ENCODE measurements at regions of chr13 and their contacts with region 1.

Region 1: DNA sequence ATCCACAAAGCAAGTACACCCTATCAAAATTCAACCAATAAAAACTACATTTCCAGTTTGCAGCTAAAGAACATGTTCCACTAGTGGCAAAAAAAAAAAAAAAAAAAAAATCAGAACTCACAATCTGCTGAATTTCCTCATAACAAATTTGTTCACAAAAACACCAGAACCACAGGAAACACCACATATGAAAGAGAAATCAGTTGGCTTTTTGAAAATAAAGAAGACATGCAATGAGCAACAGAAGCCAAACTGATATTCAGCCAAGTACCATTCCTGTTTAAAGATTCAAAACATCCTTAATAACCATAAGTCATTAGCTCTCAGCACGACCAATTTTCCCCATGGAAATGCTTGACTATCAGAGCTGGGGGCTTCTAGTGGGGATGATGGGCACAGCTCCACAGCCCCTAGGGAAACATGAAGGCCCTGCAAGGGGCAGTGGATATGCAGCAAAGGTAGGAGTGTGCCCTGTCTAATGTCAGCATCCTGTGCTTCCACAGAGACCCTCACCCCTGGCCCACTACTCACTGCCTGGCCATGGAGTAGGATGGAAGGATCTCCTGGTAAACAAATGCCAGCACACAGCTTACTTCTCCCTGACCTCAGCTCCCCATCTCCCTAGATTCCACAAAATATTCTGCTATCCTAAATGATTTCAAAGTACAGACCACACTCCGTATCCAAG is 74.0 kb upstream of the DOCK9 start:
- DNase-seq: peak in 4 of 5 donors; percentile 55 to 66 (median 62)
- H3K4me3 ChIP-seq: peak overlapping the region; percentile 36 to 57
- H3K4me3 Mint-ChIP-seq: peak overlapping the region; percentile 70 to 89 (median 85)
- H3K27ac ChIP-seq: peak overlapping the region; percentile 38
- H3K27ac Mint-ChIP-seq: peak overlapping the region; percentile 86 to 97 (median 94)
- H3K4me1 ChIP-seq: peaks cover 97% of the 10 kb centered on the region
- H3K4me1 Mint-ChIP-seq: peaks cover 70 to 97% (median 85%) of the 10 kb centered on the region in 4 donors
- H3K27me3 ChIP-seq: no peaks in the 10 kb centered on the region
- H3K27me3 Mint-ChIP-seq: no peaks in the 10 kb centered on the region

Region 2: DNA sequence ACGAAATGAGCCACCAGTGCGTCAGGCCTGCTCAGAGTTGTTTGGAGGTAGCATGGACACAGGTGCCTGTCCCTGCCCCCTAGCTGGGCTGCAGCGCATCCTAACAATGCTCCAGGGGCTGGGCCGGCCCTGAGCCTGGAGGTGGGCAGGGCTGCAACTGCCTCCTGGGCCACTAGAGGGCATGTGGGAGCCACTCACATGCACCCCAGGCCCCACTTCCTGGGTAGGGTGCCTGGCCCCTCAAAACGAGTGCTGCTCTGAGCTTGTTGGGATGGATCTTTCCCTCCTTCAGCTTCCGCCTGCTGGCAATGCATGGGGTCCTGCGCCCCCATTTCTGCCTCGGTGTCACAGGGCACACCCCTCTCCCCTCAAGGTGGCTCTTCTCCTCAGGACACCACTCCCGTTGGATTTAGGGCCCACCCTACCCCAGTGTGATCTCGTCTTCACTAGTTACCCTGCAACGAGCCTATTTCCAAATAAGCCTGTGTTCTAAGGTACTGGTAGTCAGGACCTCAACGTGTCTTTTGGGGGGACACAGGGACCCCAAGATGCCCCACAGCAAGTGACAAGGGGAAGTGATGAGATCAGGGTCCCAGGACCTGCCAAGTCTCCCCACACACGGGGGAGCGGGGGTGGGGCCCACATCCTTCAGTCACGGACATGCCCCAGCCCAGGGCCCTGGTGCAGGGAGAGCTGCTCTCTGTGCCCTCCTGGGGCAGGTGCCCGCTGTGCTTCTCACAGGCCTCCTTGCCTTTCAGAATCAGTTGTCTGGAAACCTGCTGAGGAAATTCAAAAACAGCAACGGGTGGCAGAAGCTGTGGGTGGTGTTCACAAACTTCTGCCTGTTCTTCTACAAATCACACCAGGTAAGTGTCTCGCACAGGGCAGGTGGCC is 606.3 kb before region 1 on chr13:
- CTCF ChIA-PET with region 1: no interaction called
- POLR2A ChIA-PET with region 1: no interaction called
- intact Hi-C with region 1: no loop called
- DNase-seq: peak; percentile 73 to 79 (median 74)
- H3K4me3 ChIP-seq: no peak overlapping the region
- H3K4me3 Mint-ChIP-seq: peak overlapping the region in 7 of 8 donors; percentile 27 to 82 (median 57)
- H3K27ac ChIP-seq: peak overlapping the region; percentile 33
- H3K27ac Mint-ChIP-seq: peak overlapping the region; percentile 88 to 93 (median 90)
- H3K4me1 ChIP-seq: peaks cover 18% of the 10 kb centered on the region
- H3K4me1 Mint-ChIP-seq: peaks cover 7 to 37% (median 23%) of the 10 kb centered on the region in 4 donors
- H3K27me3 ChIP-seq: no peaks in the 10 kb centered on the region
- H3K27me3 Mint-ChIP-seq: no peaks in the 10 kb centered on the region

Region 3: GRCh38 chr13:99067160-99067985 is 15.5 kb after region 1 on chr13:
- CTCF ChIA-PET with region 1: interaction called, 8 read pairs
- POLR2A ChIA-PET with region 1: interaction called, 34 read pairs
- intact Hi-C with region 1: loop called (anchors 1 kb)
- DNase-seq: no peak
- H3K4me3 ChIP-seq: no peak overlapping the region
- H3K4me3 Mint-ChIP-seq: peak overlapping the region in 7 of 8 donors; percentile 42 to 75 (median 67)
- H3K27ac ChIP-seq: no peak overlapping the region
- H3K27ac Mint-ChIP-seq: peak overlapping the region; percentile 56 to 86 (median 82)
- H3K4me1 ChIP-seq: peaks cover 55% of the 10 kb centered on the region
- H3K4me1 Mint-ChIP-seq: peaks cover 56 to 93% (median 74%) of the 10 kb centered on the region in 4 donors
- H3K27me3 ChIP-seq: no peaks in the 10 kb centered on the region
- H3K27me3 Mint-ChIP-seq: no peaks in the 10 kb centered on the region

Region 4: DNA sequence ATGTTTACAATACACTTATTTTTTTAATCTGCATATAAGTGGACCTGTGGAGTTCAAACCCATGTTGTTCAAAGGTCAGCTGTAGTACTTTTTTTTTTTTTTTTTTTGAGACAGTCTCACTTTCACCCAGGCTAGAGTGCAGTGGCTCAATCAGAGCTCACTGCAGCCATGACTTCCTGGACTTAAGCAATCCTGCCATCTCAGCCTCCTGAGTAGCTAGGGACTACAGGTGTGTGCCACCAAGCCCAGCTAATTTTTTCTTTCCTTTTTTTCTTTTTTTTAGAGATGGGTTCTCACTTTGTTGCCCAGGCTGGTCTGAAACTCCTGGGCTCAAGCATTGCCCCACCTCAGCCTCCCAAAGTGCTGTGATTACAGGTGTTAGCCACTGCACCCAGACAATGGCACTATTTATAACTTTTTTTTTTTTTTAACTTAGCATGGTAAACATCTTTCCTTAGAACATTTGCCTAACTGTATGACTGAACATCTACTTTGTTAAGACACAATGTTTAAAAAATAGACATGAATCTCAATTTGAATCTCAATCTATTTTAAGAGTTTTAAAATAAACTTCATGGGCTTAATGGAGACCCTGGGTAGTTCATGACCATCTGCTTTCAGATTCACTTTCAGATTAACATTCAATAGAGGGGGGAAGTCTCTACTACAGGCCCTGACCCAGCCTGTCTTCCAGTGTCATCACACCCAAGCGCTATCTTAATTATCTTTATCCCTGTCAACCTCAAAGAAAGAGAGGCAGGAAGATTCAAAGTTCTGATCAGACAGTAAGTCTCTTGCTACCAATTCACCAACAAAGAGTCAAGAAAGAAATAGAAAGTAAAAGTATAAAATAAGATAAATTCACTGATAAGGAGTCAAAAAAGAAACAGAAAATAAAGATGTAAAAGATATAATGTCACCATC is 23.6 kb after region 1 on chr13:
- CTCF ChIA-PET with region 1: interaction called, 6 read pairs
- POLR2A ChIA-PET with region 1: interaction called, 8 read pairs
- intact Hi-C with region 1: loop called (anchors 2 kb)
- DNase-seq: peak; percentile 48 to 70 (median 50)
- H3K4me3 ChIP-seq: no peak overlapping the region
- H3K4me3 Mint-ChIP-seq: peak overlapping the region; percentile 68 to 79 (median 72)
- H3K27ac ChIP-seq: peak overlapping the region; percentile 55
- H3K27ac Mint-ChIP-seq: peak overlapping the region; percentile 88 to 96 (median 92)
- H3K4me1 ChIP-seq: peaks cover 68% of the 10 kb centered on the region
- H3K4me1 Mint-ChIP-seq: peaks cover 59 to 93% (median 75%) of the 10 kb centered on the region in 4 donors
- H3K27me3 ChIP-seq: no peaks in the 10 kb centered on the region
- H3K27me3 Mint-ChIP-seq: no peaks in the 10 kb centered on the region

Measured in CD4-positive, alpha-beta memory T cell (primary cell).